ENCODE measurements at regions of chr3 and their contacts with region 1.

Region 1: DNA sequence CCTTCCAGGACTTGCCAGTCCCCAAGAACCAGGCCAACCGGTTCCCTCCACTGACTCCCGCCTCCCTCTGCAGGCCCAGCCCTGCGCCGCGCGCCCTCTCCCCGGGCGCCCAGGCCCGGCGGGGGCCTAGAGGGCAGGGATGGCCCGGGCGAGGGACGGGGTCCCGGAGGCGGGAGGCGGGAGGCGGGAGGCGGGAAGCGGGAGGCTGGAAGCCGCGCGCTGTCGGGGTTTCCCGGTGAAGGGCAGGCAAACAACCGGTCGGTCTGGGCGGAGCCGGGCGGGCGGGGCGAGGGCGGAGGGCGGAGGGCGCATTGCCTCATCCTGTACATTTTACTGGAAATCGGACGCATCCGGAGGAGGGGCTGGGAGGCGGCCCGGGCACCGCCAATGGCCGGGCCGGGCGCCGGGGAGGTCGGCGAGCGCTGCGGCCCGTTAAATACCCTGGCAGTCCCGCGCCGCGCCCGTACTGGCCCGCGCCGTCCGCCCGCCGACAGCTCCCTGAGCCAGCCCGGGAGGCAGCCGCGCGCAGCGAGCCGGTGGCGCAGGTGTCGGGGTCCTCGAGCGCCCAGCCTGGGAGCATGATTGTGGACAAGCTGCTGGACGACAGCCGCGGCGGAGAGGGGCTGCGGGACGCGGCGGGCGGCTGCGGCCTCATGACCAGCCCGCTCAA is at the start of gene NFKBIZ:
- DNase-seq: peak; percentile 81 to 94 (median 88)
- ATAC-seq: peak; percentile 88
- H3K4me3 ChIP-seq: peak within 1 kb of the TSS; percentile 98
- H3K4me3 Mint-ChIP-seq: peak within 1 kb of the TSS; percentile 90 to 100 (median 98)
- H3K27ac ChIP-seq: peak within 1 kb of the TSS; percentile 100
- H3K27ac Mint-ChIP-seq: peak within 1 kb of the TSS; percentile 98 to 100 (median 99)
- H3K4me1 ChIP-seq: peaks cover 20 to 27% of the 10 kb centered on the region in 2 donors
- H3K4me1 Mint-ChIP-seq: peaks cover 36 to 51% (median 42%) of the 10 kb centered on the region in 7 donors
- H3K27me3 ChIP-seq: no peaks in the 10 kb centered on the region
- H3K27me3 Mint-ChIP-seq: no peaks in the 10 kb centered on the region
- total RNA-seq, gene NFKBIZ: 108 to 913 (median 140) TPM

Region 2: DNA sequence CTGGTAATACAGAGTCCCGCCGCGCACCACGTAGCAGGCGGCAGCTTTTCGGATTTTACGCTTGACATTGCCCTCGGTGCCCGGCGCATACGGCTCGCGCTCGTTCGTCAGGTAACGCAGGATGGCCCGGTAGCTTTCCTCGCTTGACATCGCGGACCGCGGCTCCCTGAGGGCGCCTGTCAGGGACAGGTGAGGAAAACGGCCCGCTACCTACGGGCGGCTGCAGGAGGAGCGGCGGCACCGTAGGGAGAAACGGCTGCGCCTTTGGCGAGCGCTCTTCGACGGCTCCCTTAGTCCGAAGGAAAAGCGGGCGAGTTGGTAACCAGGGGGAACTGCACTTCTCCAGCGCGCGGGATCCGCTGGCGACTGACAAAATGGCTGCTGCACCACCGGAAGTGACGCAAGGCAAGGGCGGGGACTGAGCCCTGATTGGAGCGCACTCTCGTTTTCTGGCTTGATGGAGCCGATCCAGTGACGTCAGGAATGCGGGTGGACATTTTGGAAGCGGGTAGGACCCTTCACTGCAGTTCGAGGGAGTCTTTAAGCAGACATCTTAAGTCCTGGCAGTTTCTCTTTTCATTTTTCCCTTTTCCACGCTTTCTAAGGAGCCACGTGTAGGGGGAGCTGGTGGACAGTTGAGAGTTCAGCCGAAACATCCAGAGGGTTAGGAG is 172.3 kb before region 1 on chr3 and contains the start of gene ZBTB11:
- CTCF ChIA-PET with region 1: no interaction called
- POLR2A ChIA-PET with region 1: interaction called, 9 read pairs
- intact Hi-C with region 1: loop called (anchors 2 kb)
- DNase-seq: peak; percentile 98 to 100 (median 99)
- ATAC-seq: peak; percentile 80
- H3K4me3 ChIP-seq: peak within 1 kb of the TSS; percentile 91
- H3K4me3 Mint-ChIP-seq: peak within 1 kb of the TSS; percentile 87 to 97 (median 93)
- H3K27ac ChIP-seq: peak within 1 kb of the TSS; percentile 98
- H3K27ac Mint-ChIP-seq: peak within 1 kb of the TSS; percentile 93 to 100 (median 97)
- H3K4me1 ChIP-seq: peaks cover 23 to 26% of the 10 kb centered on the region in 2 donors
- H3K4me1 Mint-ChIP-seq: peaks cover 19 to 63% (median 54%) of the 10 kb centered on the region in 7 donors
- H3K27me3 ChIP-seq: no peaks in the 10 kb centered on the region
- H3K27me3 Mint-ChIP-seq: no peaks in the 10 kb centered on the region
- total RNA-seq, gene ZBTB11: 31.9 to 68.2 (median 54.2) TPM

Region 3: GRCh38 chr3:101779047-101779821 is 70.0 kb before region 1 on chr3 and contains the start of gene NXPE3:
- CTCF ChIA-PET with region 1: no interaction called
- POLR2A ChIA-PET with region 1: interaction called, 11 read pairs
- intact Hi-C with region 1: loop called (anchors 1 kb)
- DNase-seq: peak; percentile 92 to 97 (median 94)
- ATAC-seq: peak; percentile 95
- H3K4me3 ChIP-seq: peak within 1 kb of the TSS; percentile 60
- H3K4me3 Mint-ChIP-seq: peak within 1 kb of the TSS; percentile 89 to 99 (median 94)
- H3K27ac ChIP-seq: peak within 1 kb of the TSS; percentile 88
- H3K27ac Mint-ChIP-seq: peak within 1 kb of the TSS; percentile 93 to 100 (median 99)
- H3K4me1 ChIP-seq: peaks cover 27% of the 10 kb centered on the region in 2 donors
- H3K4me1 Mint-ChIP-seq: peaks cover 20 to 61% (median 53%) of the 10 kb centered on the region in 7 donors
- H3K27me3 ChIP-seq: no peaks in the 10 kb centered on the region
- H3K27me3 Mint-ChIP-seq: no peaks in the 10 kb centered on the region
- total RNA-seq, gene NXPE3: 25.9 to 48.7 (median 35.5) TPM

Region 4: DNA sequence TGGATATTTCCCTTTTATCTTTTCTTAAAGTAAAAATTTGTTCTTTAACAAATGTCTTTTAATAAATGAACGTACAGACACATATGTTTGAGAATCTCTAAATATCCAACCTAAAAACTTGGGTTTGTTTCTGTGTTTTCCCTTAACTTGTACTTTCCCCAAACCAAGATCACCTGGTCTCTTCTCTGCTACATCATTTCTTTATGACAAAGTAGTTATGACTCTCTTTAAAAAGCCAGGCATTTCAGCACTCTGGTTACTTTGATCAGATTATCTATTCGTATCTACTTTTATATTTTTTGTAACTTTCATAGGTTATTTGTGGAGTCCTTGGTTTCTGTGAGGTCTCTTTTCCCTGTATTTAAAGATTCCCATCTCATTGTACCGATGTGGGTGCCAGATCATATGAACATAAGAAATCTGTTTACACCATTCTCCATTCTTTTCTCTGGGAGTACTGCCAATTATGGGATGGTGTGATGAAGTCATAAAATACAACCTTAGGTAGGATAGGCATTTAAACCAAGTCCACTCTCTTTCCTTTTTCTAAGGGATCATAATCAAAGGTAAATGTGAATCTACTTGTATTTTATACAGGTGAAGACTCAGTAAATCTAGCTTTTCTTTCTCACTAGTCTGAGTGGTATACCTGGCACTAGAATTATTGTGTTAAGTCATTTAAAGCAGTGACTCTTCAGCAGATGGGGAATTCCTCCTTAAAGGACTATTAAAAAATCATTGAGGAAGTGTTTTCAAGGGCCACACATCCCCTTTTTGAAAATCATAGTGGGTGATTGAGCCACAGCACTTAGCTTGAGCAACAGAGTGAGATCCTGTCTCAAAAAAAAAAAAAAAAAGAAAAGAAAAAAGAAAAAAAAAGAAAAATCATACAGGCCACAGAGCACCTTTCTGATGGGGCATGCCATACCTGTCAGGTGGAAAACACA is 12.3 kb before region 1 on chr3:
- CTCF ChIA-PET with region 1: interaction called, 6 read pairs
- POLR2A ChIA-PET with region 1: interaction called, 29 read pairs
- intact Hi-C with region 1: loop called (anchors 1 kb)
- DNase-seq: no peak
- ATAC-seq: peak; percentile 79
- H3K4me3 ChIP-seq: no peak overlapping the region
- H3K4me3 Mint-ChIP-seq: no peak overlapping the region
- H3K27ac ChIP-seq: no peak overlapping the region
- H3K27ac Mint-ChIP-seq: peak overlapping the region in 1 of 9 donors; percentile 13
- H3K4me1 ChIP-seq: peaks cover 0 to 12% of the 10 kb centered on the region in 2 donors
- H3K4me1 Mint-ChIP-seq: peaks cover 40 to 61% (median 52%) of the 10 kb centered on the region in 7 donors
- H3K27me3 ChIP-seq: no peaks in the 10 kb centered on the region
- H3K27me3 Mint-ChIP-seq: no peaks in the 10 kb centered on the region

Region 5: DNA sequence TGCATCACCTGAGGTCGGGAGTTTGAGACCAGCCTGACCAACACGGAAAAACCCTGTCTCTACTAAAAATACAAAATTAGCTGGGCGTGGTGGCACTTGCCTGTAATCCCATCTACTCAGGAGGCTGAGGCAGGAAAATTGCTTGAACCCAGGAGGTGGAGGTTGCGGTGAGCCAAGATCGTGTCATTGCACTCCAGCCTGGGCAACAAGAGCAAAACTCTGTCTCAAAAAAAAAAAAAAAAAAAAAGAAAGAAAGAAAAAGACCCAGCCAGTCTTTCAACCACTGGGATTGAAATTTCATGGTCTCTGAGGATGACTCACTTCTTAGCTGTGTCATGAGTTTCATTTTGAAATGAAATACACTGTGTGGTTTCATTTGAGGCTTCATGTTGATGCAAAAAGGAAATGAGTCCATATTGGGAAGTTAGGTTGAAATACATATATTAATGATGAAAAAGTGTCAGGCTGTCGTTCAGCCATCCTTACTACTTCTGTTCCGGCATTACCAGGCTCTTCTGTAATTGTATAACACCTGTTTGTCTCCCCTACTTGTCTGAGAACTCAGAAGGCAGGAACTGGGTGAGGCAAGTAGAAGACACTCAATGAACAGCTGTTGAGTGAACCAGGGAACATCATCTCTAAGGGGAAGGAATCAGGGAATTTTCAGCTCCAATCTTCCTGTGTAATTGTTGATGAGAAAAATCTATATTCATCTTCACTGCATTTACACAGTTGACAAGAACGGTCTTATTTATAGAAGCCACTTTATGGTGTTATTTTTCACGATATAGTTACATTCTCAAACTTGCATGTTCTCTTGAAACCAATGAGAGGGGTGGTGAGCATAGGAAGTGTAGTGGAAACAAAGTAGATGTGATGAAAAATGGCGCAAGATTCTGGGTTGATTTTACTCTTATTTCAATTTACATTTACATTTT is 87.5 kb after region 1 on chr3:
- CTCF ChIA-PET with region 1: interaction called, 3 read pairs
- POLR2A ChIA-PET with region 1: interaction called, 24 read pairs
- intact Hi-C with region 1: loop called (anchors 1 kb)
- DNase-seq: peak in 8 of 9 donors; percentile 34 to 68 (median 58)
- ATAC-seq: peak; percentile 90
- H3K4me3 ChIP-seq: peak overlapping the region; percentile 9
- H3K4me3 Mint-ChIP-seq: peak overlapping the region in 9 of 10 donors; percentile 44 to 77 (median 72)
- H3K27ac ChIP-seq: no peak overlapping the region
- H3K27ac Mint-ChIP-seq: peak overlapping the region; percentile 76 to 91 (median 87)
- H3K4me1 ChIP-seq: peaks cover 28 to 56% of the 10 kb centered on the region in 2 donors
- H3K4me1 Mint-ChIP-seq: peaks cover 15 to 43% (median 30%) of the 10 kb centered on the region in 7 donors
- H3K27me3 ChIP-seq: no peaks in the 10 kb centered on the region
- H3K27me3 Mint-ChIP-seq: peaks cover 0 to 27% (median 0%) of the 10 kb centered on the region in 5 donors

Region 6: GRCh38 chr3:102089904-102090492 is 240.8 kb after region 1 on chr3:
- CTCF ChIA-PET with region 1: no interaction called
- POLR2A ChIA-PET with region 1: no interaction called
- intact Hi-C with region 1: loop called in 1 of 2 experiments (anchors 1 kb)
- DNase-seq: no peak
- ATAC-seq: no peak
- H3K4me3 ChIP-seq: no peak overlapping the region
- H3K4me3 Mint-ChIP-seq: no peak overlapping the region
- H3K27ac ChIP-seq: no peak overlapping the region
- H3K27ac Mint-ChIP-seq: no peak overlapping the region
- H3K4me1 ChIP-seq: peaks cover 0 to 13% of the 10 kb centered on the region in 2 donors
- H3K4me1 Mint-ChIP-seq: peaks cover 12 to 51% (median 30%) of the 10 kb centered on the region in 7 donors
- H3K27me3 ChIP-seq: no peaks in the 10 kb centered on the region
- H3K27me3 Mint-ChIP-seq: peaks cover 0 to 5% (median 0%) of the 10 kb centered on the region in 5 donors

Region 7: GRCh38 chr3:102229062-102229655 is 380.0 kb after region 1 on chr3:
- CTCF ChIA-PET with region 1: interaction called, 17 read pairs
- POLR2A ChIA-PET with region 1: interaction called, 56 read pairs
- intact Hi-C with region 1: loop called (anchors 1 kb)
- DNase-seq: peak; percentile 49 to 80 (median 74)
- ATAC-seq: peak; percentile 89
- H3K4me3 ChIP-seq: no peak overlapping the region
- H3K4me3 Mint-ChIP-seq: no peak overlapping the region
- H3K27ac ChIP-seq: no peak overlapping the region
- H3K27ac Mint-ChIP-seq: no peak overlapping the region
- H3K4me1 ChIP-seq: peaks cover 0 to 6% of the 10 kb centered on the region in 2 donors
- H3K4me1 Mint-ChIP-seq: peaks cover 1 to 27% (median 14%) of the 10 kb centered on the region in 7 donors
- H3K27me3 ChIP-seq: no peaks in the 10 kb centered on the region
- H3K27me3 Mint-ChIP-seq: peaks cover 0 to 25% (median 0%) of the 10 kb centered on the region in 5 donors